Dorsolateral prefrontal cortex (tissue), 120 donors: ENCODE measurements at regions of chr4 and their contacts with region 1.

Region 1: GRCh38 chr4:113116414-113117357 is 67.2 kb downstream of the ANK2 start:
- DNase-seq: peak in 8 of 10 donors; percentile 22 to 73 (median 61)
- H3K4me3 ChIP-seq: peak overlapping the region in 58 of 59 donors; percentile 18 to 67 (median 48)
- H3K27ac ChIP-seq: peak overlapping the region in 51 of 59 donors; percentile 3 to 82 (median 58)
- H3K27me3 ChIP-seq: no peaks in the 10 kb centered on the region
- CTCF ChIP-seq: peak in 1 of 56 donors; percentile 10

Region 2: GRCh38 chr4:113292371-113293042 is 175.8 kb after region 1 on chr4:
- intact Hi-C with region 1: loop called (anchors 5 to 10 kb)
- DNase-seq: peak; percentile 30 to 76 (median 64)
- H3K4me3 ChIP-seq: peak overlapping the region in 51 of 59 donors; percentile 1 to 53 (median 30)
- H3K27ac ChIP-seq: peak overlapping the region; percentile 36 to 91 (median 85)
- H3K27me3 ChIP-seq: no peaks in the 10 kb centered on the region
- CTCF ChIP-seq: peak in 1 of 56 donors; percentile 12